Psoas muscle (tissue), 8 donors: ENCODE measurements at regions of chr17 and their contacts with region 1.

Region 1: GRCh38 chr17:14080847-14081251 is 11.5 kb downstream of the COX10 start:
- DNase-seq: no peak
- ATAC-seq: peak in 2 of 4 donors; percentile 36 to 49
- H3K4me3 ChIP-seq: no peak overlapping the region
- H3K27ac ChIP-seq: peak overlapping the region; percentile 31
- H3K4me1 ChIP-seq: peaks cover 16% of the 10 kb centered on the region
- H3K27me3 ChIP-seq: no peaks in the 10 kb centered on the region
- CTCF ChIP-seq: no peak

Region 2: GRCh38 chr17:13508896-13509295 is 572.0 kb before region 1 on chr17:
- intact Hi-C with region 1: no loop called
- DNase-seq: no peak
- ATAC-seq: no peak
- H3K4me3 ChIP-seq: no peak overlapping the region
- H3K27ac ChIP-seq: no peak overlapping the region
- H3K4me1 ChIP-seq: no peaks in the 10 kb centered on the region
- H3K27me3 ChIP-seq: no peaks in the 10 kb centered on the region
- CTCF ChIP-seq: no peak

Region 3: DNA sequence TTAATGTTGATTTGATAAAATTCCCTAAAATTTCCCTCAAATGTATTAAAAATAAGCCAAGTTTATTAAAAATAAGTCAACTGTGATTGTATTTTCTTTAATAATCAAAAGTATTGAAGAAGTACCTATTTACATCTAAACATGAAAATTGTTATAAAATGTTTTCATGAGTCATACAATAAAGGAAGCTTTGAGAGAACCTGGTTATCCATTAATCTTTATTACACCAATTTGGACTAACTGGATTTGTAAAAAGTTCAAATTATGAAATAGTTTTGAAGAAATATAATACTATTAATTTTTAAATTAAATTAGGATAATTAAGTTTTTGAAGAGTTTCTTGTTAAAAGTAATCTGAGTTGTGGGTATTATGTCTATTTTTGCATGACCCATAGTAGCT is 52.3 kb after region 1 on chr17:
- intact Hi-C with region 1: loop called in 1 of 2 experiments (anchors 5 kb)
- DNase-seq: no peak
- ATAC-seq: no peak
- H3K4me3 ChIP-seq: no peak overlapping the region
- H3K27ac ChIP-seq: no peak overlapping the region
- H3K4me1 ChIP-seq: peaks cover 4% of the 10 kb centered on the region
- H3K27me3 ChIP-seq: no peaks in the 10 kb centered on the region
- CTCF ChIP-seq: no peak